ENCODE measurements at regions of chr2 and their contacts with region 1.

Region 1: DNA sequence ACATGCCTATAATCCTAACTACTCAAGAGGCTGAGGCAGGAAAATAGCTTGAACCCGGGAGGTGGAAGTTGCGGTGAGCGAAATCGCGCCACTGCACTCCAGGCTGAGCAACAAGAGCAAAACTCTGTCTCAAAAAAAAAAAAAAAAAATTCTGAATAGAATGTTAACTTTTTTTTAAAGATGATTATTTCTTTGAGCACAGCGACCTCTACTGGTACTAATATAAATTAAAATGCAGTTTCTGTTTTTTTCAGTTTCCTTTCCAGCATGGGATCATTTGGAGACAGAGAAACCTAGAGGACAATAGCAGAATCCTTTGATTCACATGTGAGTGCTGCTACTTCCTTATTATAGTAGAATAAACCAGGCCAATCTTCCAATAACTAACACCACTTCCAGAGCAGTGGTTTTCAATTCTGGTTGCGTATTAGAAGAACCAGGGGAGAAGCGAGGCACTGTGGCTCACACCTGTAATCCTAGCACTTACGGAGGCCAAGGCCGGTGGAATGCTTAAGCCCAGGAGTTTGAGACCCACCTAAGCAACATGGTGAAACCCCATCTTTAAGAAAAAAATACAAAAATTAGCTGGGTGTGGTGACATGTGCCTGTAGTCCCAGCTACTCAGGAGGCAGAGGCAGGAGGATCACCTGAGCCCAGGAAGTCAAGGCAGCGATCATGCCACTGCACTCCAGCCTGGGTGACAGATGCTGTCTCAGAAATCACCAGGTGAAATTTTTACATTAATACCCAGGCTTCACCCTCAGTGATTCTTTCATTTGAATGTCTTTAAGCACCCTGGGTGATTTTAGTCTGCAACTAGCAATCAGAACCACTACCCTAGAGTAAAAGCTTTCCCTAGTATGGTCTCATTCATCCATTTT is 10.1 kb downstream of the SRSF7 start:
- DNase-seq: no peak
- H3K4me3 ChIP-seq: peak overlapping the region in 9 of 59 donors; percentile 1 to 36 (median 12)
- H3K27ac ChIP-seq: peak overlapping the region in 25 of 59 donors; percentile 2 to 71 (median 37)
- H3K27me3 ChIP-seq: no peaks in the 10 kb centered on the region
- CTCF ChIP-seq: peak; percentile 52 to 93 (median 74)

Region 2: DNA sequence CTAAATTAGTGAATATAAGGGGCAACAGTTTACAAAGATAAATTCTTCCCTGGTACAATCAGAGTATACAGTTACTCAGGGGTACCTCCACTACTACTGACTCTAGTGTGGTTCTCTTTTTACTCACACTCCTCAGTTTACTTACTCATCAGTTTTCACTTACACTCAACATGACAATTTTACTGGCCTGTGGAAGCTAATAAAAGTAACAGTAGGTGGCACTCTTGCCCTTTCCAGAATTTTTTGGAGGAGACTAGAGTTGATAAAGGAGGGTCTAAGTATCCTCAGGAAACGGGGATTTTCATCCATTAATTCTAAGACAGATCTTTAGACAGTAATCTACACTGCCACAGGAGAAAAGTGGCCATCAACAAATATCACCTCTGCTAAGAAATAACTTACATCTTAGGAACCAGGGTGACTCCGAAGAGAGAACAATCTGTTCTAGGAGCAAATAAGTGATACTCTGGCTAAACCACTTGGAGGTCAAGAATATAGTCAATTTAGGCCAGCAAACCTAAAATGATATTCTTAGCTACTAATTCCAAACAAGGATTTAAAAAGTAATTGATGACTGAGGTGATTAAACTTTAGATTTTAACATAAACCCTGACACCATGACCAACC is 425.3 kb before region 1 on chr2:
- intact Hi-C with region 1: loop called (anchors 5 to 10 kb)
- DNase-seq: no peak
- H3K4me3 ChIP-seq: no peak overlapping the region
- H3K27ac ChIP-seq: no peak overlapping the region
- H3K27me3 ChIP-seq: no peaks in the 10 kb centered on the region
- CTCF ChIP-seq: peak; percentile 44 to 89 (median 72)

Region 3: GRCh38 chr2:38581193-38582147 is 159.6 kb before region 1 on chr2:
- intact Hi-C with region 1: loop called in 1 of 2 experiments (anchors 2 kb)
- DNase-seq: peak in 7 of 10 donors; percentile 28 to 63 (median 50)
- H3K4me3 ChIP-seq: no peak overlapping the region
- H3K27ac ChIP-seq: peak overlapping the region in 12 of 59 donors; percentile 2 to 57 (median 19)
- H3K27me3 ChIP-seq: no peaks in the 10 kb centered on the region
- CTCF ChIP-seq: peak; percentile 65 to 90 (median 79)